PC-9 (cell line): ENCODE measurements at regions of chr1 and their contacts with region 1.

Region 1: GRCh38 chr1:28971980-28972771 is 57.8 kb downstream of the EPB41 start:
- DNase-seq: peak; percentile 61 to 85
- H3K4me3 ChIP-seq: no peak overlapping the region
- H3K27ac ChIP-seq: peak overlapping the region; percentile 85
- H3K4me1 ChIP-seq: peaks cover 33% of the 10 kb centered on the region
- H3K27me3 ChIP-seq: no peaks in the 10 kb centered on the region
- CTCF ChIP-seq: no peak

Region 2: DNA sequence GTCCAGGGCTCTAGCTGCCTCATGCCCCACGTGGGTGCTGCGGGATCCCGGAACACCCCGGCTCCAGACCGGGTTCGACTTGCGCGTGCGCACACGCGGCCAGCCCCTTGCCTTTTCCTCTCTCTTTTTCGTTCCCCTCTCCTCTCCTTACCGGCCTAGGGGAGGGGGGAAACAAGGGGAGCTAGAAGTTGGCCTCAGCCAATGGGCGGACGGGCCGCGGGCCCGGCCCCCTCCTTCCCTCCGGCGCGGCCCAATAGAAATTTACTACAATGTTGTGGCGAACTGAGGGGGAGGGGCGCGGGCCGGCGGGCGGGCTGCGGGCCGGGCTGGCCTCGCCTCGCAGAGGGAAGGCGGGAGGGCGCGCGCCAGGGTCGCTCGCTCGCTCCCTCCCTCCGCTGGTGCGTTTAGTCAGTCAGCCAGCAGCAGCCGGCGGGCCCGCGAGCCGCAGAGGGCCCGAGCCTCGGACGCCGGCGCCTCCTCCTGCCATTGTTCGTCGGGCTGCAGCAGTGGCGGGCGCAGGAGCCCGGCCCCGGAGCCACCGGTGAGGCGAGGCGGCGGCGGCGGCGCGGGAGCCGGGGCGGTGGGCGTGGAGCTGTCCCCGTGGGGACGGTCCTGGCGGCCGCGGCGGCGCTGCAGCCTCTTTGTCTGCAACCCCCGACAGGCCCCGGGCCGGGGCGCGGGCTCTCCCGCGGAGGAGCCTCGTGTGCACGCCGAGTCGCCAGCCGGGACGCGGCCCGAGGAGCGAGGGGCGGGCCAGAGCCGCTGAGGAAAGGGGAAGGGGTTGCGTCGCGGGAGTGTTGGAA is 57.7 kb before region 1 on chr1 and contains the start of gene EPB41:
- CTCF ChIA-PET with region 1: interaction called, 3 read pairs
- POLR2A ChIA-PET with region 1: no interaction called
- intact Hi-C with region 1: loop called (anchors 2 kb)
- DNase-seq: peak; percentile 73 to 90
- H3K4me3 ChIP-seq: peak within 1 kb of the TSS; percentile 54
- H3K27ac ChIP-seq: no peak within 1 kb of the TSS
- H3K4me1 ChIP-seq: 0 out of 2 replicates have a peak, but pooled peaks cover 5% of the 10 kb centered on the region
- H3K27me3 ChIP-seq: no peaks in the 10 kb centered on the region
- CTCF ChIP-seq: no peak
- total RNA-seq, gene EPB41: 36.0 and 42.2 TPM in 2 replicates